Calu3 (cell line): ENCODE measurements at regions of chr22 and their contacts with region 1.

Region 1: DNA sequence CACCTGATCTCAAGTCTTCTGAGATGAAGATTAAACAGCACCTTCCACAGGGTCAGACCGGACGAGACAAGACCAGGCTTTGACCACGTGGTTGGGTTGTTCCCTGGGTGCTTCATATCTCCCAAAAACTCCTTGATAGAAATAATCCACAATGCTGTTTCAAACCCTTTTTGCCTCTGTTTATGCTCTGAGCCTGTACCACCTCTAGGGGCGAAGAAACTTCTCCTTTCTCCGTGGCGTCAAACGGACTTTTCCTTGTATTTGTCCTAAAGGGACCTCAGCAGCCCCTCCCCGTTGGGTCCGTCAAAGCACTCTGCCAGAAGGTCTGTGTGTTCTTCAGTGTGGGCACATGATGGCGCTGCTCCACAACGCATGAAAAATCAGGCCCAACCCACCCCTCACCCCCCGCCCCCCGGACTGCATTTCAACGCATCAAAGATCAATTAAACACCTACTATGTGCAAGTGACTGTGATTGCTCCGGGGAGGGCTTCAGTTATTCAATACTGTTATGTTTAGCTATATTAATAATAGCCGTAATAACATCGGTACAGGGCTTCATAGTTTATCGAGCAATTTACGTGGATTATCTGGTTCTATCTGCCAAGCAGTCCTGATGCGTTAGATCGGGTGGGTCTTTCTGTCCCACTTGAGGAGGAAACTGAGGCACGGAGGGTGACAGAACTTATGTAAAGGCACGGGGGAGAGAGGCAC is 17.3 kb upstream of the EIF3D start:
- DNase-seq: peak; percentile 64
- H3K4me3 Mint-ChIP-seq: peak overlapping the region; percentile 4
- H3K27ac Mint-ChIP-seq: no peak overlapping the region
- H3K4me1 Mint-ChIP-seq: peaks cover 19% of the 10 kb centered on the region
- H3K27me3 Mint-ChIP-seq: peaks cover 47% of the 10 kb centered on the region
- CTCF ChIP-seq: peak; percentile 91

Region 2: GRCh38 chr22:36659762-36660509 is 113.7 kb after region 1 on chr22:
- CTCF ChIA-PET with region 1: no interaction called
- intact Hi-C with region 1: loop called (anchors 5 kb)
- DNase-seq: peak; percentile 96
- H3K4me3 Mint-ChIP-seq: peak overlapping the region; percentile 67
- H3K27ac Mint-ChIP-seq: peak overlapping the region; percentile 83
- H3K4me1 Mint-ChIP-seq: peaks cover 43% of the 10 kb centered on the region
- H3K27me3 Mint-ChIP-seq: peaks cover 23% of the 10 kb centered on the region
- CTCF ChIP-seq: no peak

Region 3: GRCh38 chr22:36775964-36776669 is 229.9 kb after region 1 on chr22 and contains the start of gene IFT27:
- CTCF ChIA-PET with region 1: interaction called, 9 read pairs
- intact Hi-C with region 1: loop called (anchors 5 kb)
- DNase-seq: peak; percentile 96
- H3K4me3 Mint-ChIP-seq: peak within 1 kb of the TSS; percentile 76
- H3K27ac Mint-ChIP-seq: peak within 1 kb of the TSS; percentile 78
- H3K4me1 Mint-ChIP-seq: peaks cover 6% of the 10 kb centered on the region
- H3K27me3 Mint-ChIP-seq: peaks cover 25% of the 10 kb centered on the region
- CTCF ChIP-seq: no peak
- total RNA-seq, gene IFT27: 41.0 and 47.0 TPM in 2 replicates

Region 4: GRCh38 chr22:36856121-36856791 is 310.0 kb after region 1 on chr22:
- CTCF ChIA-PET with region 1: interaction called, 22 read pairs
- intact Hi-C with region 1: loop called (anchors 1 kb)
- DNase-seq: peak; percentile 95
- H3K4me3 Mint-ChIP-seq: peak overlapping the region; percentile 4
- H3K27ac Mint-ChIP-seq: peak overlapping the region; percentile 6
- H3K4me1 Mint-ChIP-seq: peaks cover 17% of the 10 kb centered on the region
- H3K27me3 Mint-ChIP-seq: peaks cover 57% of the 10 kb centered on the region
- CTCF ChIP-seq: peak; percentile 100